Activated CD8-positive, alpha-beta T cell treated with anti-CD3 and anti-CD28 coated beads for 36 hours (primary cell): ENCODE measurements at regions of chr4 and their contacts with region 1.

Region 1: GRCh38 chr4:147866532-147867271 is 134.8 kb downstream of the ARHGAP10 start:
- DNase-seq: peak; percentile 97
- ATAC-seq: peak; percentile 95
- H3K4me3 Mint-ChIP-seq: no peak overlapping the region
- H3K27ac Mint-ChIP-seq: no peak overlapping the region
- H3K4me1 Mint-ChIP-seq: no peaks in the 10 kb centered on the region
- H3K27me3 Mint-ChIP-seq: no peaks in the 10 kb centered on the region
- CTCF ChIP-seq: peak; percentile 99

Region 2: GRCh38 chr4:147596981-147597380 is 269.7 kb before region 1 on chr4:
- CTCF ChIA-PET with region 1: interaction called, 46 read pairs
- POLR2A ChIA-PET with region 1: no interaction called
- intact Hi-C with region 1: loop called (anchors 10 kb)
- DNase-seq: no peak
- ATAC-seq: no peak
- H3K4me3 Mint-ChIP-seq: no peak overlapping the region
- H3K27ac Mint-ChIP-seq: no peak overlapping the region
- H3K4me1 Mint-ChIP-seq: no peaks in the 10 kb centered on the region
- H3K27me3 Mint-ChIP-seq: no peaks in the 10 kb centered on the region
- CTCF ChIP-seq: no peak

Region 3: GRCh38 chr4:147683717-147684700 is 182.7 kb before region 1 on chr4 and contains the start of gene PRMT9:
- CTCF ChIA-PET with region 1: interaction called, 47 read pairs
- POLR2A ChIA-PET with region 1: no interaction called
- intact Hi-C with region 1: no loop called
- DNase-seq: peak; percentile 91
- ATAC-seq: peak; percentile 98
- H3K4me3 Mint-ChIP-seq: peak within 1 kb of the TSS; percentile 89
- H3K27ac Mint-ChIP-seq: peak within 1 kb of the TSS; percentile 92
- H3K4me1 Mint-ChIP-seq: peaks cover 24% of the 10 kb centered on the region
- H3K27me3 Mint-ChIP-seq: peaks cover 5% of the 10 kb centered on the region
- CTCF ChIP-seq: no peak
- total RNA-seq, gene PRMT9: 7.4 to 8.8 TPM

Region 4: GRCh38 chr4:147723326-147723725 is 143.4 kb before region 1 on chr4:
- CTCF ChIA-PET with region 1: interaction called, 18 read pairs
- POLR2A ChIA-PET with region 1: no interaction called
- intact Hi-C with region 1: no loop called
- DNase-seq: no peak
- ATAC-seq: no peak
- H3K4me3 Mint-ChIP-seq: no peak overlapping the region
- H3K27ac Mint-ChIP-seq: no peak overlapping the region
- H3K4me1 Mint-ChIP-seq: no peaks in the 10 kb centered on the region
- H3K27me3 Mint-ChIP-seq: peaks cover 2% of the 10 kb centered on the region
- CTCF ChIP-seq: no peak

Region 5: GRCh38 chr4:147786031-147786430 is 80.7 kb before region 1 on chr4:
- CTCF ChIA-PET with region 1: interaction called, 14 read pairs
- POLR2A ChIA-PET with region 1: interaction called, 4 read pairs
- intact Hi-C with region 1: no loop called
- DNase-seq: no peak
- ATAC-seq: no peak
- H3K4me3 Mint-ChIP-seq: no peak overlapping the region
- H3K27ac Mint-ChIP-seq: no peak overlapping the region
- H3K4me1 Mint-ChIP-seq: peaks cover 26% of the 10 kb centered on the region
- H3K27me3 Mint-ChIP-seq: no peaks in the 10 kb centered on the region
- CTCF ChIP-seq: no peak

Region 6: DNA sequence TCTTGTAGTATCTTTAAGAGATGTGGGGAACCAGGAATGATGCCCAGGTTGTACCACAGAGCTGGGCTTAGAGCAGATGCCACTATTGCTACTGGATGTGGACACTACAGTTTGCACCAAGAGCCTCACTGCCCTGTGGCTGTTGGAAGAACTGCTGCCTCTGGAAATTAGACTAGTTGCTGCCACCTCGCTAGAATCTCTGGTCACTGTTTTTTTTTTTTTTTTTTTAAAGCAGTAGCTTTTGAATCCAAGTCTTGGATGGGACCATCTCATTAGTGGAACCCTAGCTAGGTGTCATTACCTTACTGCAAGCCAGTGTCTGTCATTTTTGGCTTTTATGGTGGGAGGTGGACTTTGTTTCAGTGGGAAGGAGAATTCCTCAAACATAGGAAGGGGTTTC is 29.3 kb before region 1 on chr4:
- CTCF ChIA-PET with region 1: interaction called, 103 read pairs
- POLR2A ChIA-PET with region 1: no interaction called
- intact Hi-C with region 1: no loop called
- DNase-seq: no peak
- ATAC-seq: no peak
- H3K4me3 Mint-ChIP-seq: no peak overlapping the region
- H3K27ac Mint-ChIP-seq: no peak overlapping the region
- H3K4me1 Mint-ChIP-seq: peaks cover 12% of the 10 kb centered on the region
- H3K27me3 Mint-ChIP-seq: no peaks in the 10 kb centered on the region
- CTCF ChIP-seq: no peak

Region 7: GRCh38 chr4:147909225-147909624 is 42.5 kb after region 1 on chr4:
- CTCF ChIA-PET with region 1: interaction called, 11 read pairs
- POLR2A ChIA-PET with region 1: no interaction called
- intact Hi-C with region 1: no loop called
- DNase-seq: no peak
- ATAC-seq: peak; percentile 4
- H3K4me3 Mint-ChIP-seq: no peak overlapping the region
- H3K27ac Mint-ChIP-seq: no peak overlapping the region
- H3K4me1 Mint-ChIP-seq: no peaks in the 10 kb centered on the region
- H3K27me3 Mint-ChIP-seq: no peaks in the 10 kb centered on the region
- CTCF ChIP-seq: no peak

Region 8: DNA sequence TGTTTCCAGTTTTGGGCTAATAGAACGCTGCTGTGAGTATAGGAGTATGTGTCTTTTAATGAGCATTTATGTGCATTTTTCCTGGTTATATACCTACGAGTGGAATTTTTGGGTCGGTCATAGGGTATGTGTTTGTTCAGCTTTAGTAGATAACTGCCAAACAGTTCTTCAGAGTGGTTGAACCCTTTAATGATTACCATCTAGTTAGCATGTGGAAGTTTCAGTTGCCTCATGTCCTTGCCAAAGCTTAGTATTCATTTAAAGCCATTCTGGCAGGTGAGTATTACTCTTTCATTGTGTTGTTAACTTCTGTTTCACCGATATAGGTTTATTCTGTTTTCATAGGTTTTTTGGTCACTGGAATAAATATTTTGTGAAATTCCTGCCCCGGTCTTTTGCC is 94.3 kb after region 1 on chr4:
- CTCF ChIA-PET with region 1: no interaction called
- POLR2A ChIA-PET with region 1: no interaction called
- intact Hi-C with region 1: no loop called
- DNase-seq: no peak
- ATAC-seq: no peak
- H3K4me3 Mint-ChIP-seq: no peak overlapping the region
- H3K27ac Mint-ChIP-seq: no peak overlapping the region
- H3K4me1 Mint-ChIP-seq: no peaks in the 10 kb centered on the region
- H3K27me3 Mint-ChIP-seq: no peaks in the 10 kb centered on the region
- CTCF ChIP-seq: no peak

Region 9: DNA sequence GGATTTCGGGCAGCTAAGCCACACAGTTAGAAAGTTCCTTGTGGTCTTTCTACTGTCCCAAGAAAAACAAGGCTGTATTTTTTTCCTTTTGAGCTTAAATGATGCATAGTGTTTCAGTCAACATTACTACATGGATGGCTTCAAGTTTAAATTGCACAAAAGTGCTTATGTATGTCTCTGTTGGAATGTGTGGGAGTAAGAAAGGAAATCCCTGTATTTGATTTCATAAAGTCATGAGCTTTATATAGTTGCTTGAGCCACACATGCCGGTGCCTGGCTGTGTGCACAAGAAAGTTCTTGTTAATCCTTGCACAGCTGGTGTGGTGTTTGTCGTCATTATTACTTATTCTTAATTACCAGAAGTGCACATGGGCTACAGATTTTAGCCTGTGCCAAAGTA is 127.4 kb after region 1 on chr4:
- CTCF ChIA-PET with region 1: no interaction called
- POLR2A ChIA-PET with region 1: no interaction called
- intact Hi-C with region 1: no loop called
- DNase-seq: no peak
- ATAC-seq: no peak
- H3K4me3 Mint-ChIP-seq: no peak overlapping the region
- H3K27ac Mint-ChIP-seq: no peak overlapping the region
- H3K4me1 Mint-ChIP-seq: no peaks in the 10 kb centered on the region
- H3K27me3 Mint-ChIP-seq: no peaks in the 10 kb centered on the region
- CTCF ChIP-seq: no peak